ENCODE measurements at regions of chr6 and their contacts with region 1.

Region 1: DNA sequence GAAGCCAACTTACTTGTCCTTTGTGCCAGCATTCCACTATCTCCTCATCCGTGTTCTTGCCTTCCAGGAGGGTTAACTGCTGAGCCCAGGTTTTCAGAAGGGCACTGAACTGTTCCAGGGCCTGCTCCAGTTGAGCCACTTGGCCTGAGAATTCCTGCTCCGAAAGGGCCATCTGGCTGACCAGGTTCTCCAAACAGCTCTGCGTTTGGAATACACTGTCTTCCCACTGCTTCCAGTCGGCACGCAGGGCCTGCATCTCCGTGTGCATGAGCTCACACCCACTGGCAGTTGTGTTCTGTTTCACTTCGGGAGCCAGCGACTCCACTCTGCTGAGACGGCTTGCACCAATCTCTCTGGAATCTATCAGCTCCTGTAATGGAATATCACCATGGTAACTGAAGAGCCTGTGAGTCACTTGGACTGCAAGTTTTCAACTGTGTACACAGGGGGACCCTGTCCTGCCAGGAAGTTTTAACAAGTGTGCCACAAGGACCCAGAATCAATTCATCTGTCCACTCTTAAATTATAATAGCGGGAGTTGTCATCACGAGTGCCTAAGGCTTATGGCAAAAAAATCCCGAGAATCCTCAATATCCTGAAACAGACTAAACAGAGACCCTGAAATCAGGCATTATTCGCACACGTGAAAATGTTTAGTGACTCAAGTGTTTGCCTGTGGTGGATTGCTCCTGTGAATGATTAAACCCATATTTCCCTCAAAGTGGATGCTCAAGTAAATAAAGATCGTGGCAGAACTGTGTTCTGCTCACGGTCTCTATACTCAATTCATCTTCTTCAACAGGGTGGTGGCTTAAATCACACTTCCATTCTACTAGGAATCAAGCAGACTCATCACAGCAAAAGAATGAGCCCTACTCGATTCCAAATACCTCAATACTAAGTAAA is 255.9 kb downstream of the SYNE1 start:
- DNase-seq: peak; percentile 97
- ATAC-seq: peak; percentile 78
- H3K4me3 ChIP-seq: peak overlapping the region; percentile 37
- H3K27ac ChIP-seq: peak overlapping the region; percentile 99
- H3K4me1 ChIP-seq: peaks cover 6% of the 10 kb centered on the region
- H3K27me3 ChIP-seq: no peaks in the 10 kb centered on the region
- CTCF ChIP-seq: no peak
- POLR2A ChIP-seq: peak; percentile 96
- RAD21 ChIP-seq: no peak

Region 2: GRCh38 chr6:152368761-152369624 is 12.3 kb before region 1 on chr6:
- CTCF ChIA-PET with region 1: interaction called, 6 read pairs
- POLR2A ChIA-PET with region 1: no interaction called
- dilution Hi-C with region 1: no loop called
- in situ Hi-C with region 1: no loop called
- intact Hi-C with region 1: loop called (anchors 1 kb)
- DNase-seq: peak; percentile 35
- ATAC-seq: peak; percentile 56
- H3K4me3 ChIP-seq: no peak overlapping the region
- H3K27ac ChIP-seq: peak overlapping the region; percentile 37; the same call in 1 of the 2 replicates
- H3K4me1 ChIP-seq: peaks cover 5% of the 10 kb centered on the region
- H3K27me3 ChIP-seq: no peaks in the 10 kb centered on the region
- CTCF ChIP-seq: no peak
- POLR2A ChIP-seq: no peak
- RAD21 ChIP-seq: no peak

Region 3: GRCh38 chr6:152471456-152472265 is 90.4 kb after region 1 on chr6:
- CTCF ChIA-PET with region 1: interaction called, 3 read pairs
- POLR2A ChIA-PET with region 1: no interaction called
- dilution Hi-C with region 1: no loop called
- in situ Hi-C with region 1: no loop called
- intact Hi-C with region 1: loop called (anchors 5 kb)
- DNase-seq: peak; percentile 49
- ATAC-seq: peak; percentile 89
- H3K4me3 ChIP-seq: peak overlapping the region; percentile 50; the same call in 1 of the 2 replicates
- H3K27ac ChIP-seq: peak overlapping the region; percentile 37; the same call in 1 of the 2 replicates
- H3K4me1 ChIP-seq: no peaks in the 10 kb centered on the region
- H3K27me3 ChIP-seq: no peaks in the 10 kb centered on the region
- CTCF ChIP-seq: no peak
- POLR2A ChIP-seq: no peak
- RAD21 ChIP-seq: no peak

Region 4: GRCh38 chr6:152484806-152485205 is 103.6 kb after region 1 on chr6:
- CTCF ChIA-PET with region 1: no interaction called
- POLR2A ChIA-PET with region 1: no interaction called
- dilution Hi-C with region 1: no loop called
- in situ Hi-C with region 1: no loop called
- intact Hi-C with region 1: loop called (anchors 2 kb)
- DNase-seq: no peak
- ATAC-seq: no peak
- H3K4me3 ChIP-seq: no peak overlapping the region
- H3K27ac ChIP-seq: no peak overlapping the region
- H3K4me1 ChIP-seq: no peaks in the 10 kb centered on the region
- H3K27me3 ChIP-seq: no peaks in the 10 kb centered on the region
- CTCF ChIP-seq: no peak
- POLR2A ChIP-seq: no peak
- RAD21 ChIP-seq: no peak

Region 5: GRCh38 chr6:152609188-152609587 is 227.9 kb after region 1 on chr6:
- CTCF ChIA-PET with region 1: no interaction called
- POLR2A ChIA-PET with region 1: no interaction called
- dilution Hi-C with region 1: no loop called
- in situ Hi-C with region 1: no loop called
- intact Hi-C with region 1: no loop called
- DNase-seq: no peak
- ATAC-seq: no peak
- H3K4me3 ChIP-seq: no peak overlapping the region
- H3K27ac ChIP-seq: no peak overlapping the region
- H3K4me1 ChIP-seq: no peaks in the 10 kb centered on the region
- H3K27me3 ChIP-seq: no peaks in the 10 kb centered on the region
- CTCF ChIP-seq: no peak
- POLR2A ChIP-seq: no peak
- RAD21 ChIP-seq: no peak

Region 6: GRCh38 chr6:152669895-152670294 is 288.6 kb after region 1 on chr6:
- CTCF ChIA-PET with region 1: no interaction called
- POLR2A ChIA-PET with region 1: no interaction called
- dilution Hi-C with region 1: no loop called
- in situ Hi-C with region 1: no loop called
- intact Hi-C with region 1: loop called (anchors 10 kb)
- DNase-seq: peak; percentile 60
- ATAC-seq: peak; percentile 79
- H3K4me3 ChIP-seq: no peak overlapping the region
- H3K27ac ChIP-seq: no peak overlapping the region
- H3K4me1 ChIP-seq: peaks cover 2% of the 10 kb centered on the region; the same call in 1 of the 2 replicates
- H3K27me3 ChIP-seq: no peaks in the 10 kb centered on the region
- CTCF ChIP-seq: peak; percentile 65
- POLR2A ChIP-seq: no peak
- RAD21 ChIP-seq: peak; percentile 71

Region 7: GRCh38 chr6:152982768-152983636 is 601.8 kb after region 1 on chr6 and contains the start of gene FBXO5:
- CTCF ChIA-PET with region 1: no interaction called
- POLR2A ChIA-PET with region 1: no interaction called
- dilution Hi-C with region 1: no loop called
- in situ Hi-C with region 1: no loop called
- intact Hi-C with region 1: loop called (anchors 5 kb)
- DNase-seq: peak; percentile 97
- ATAC-seq: peak; percentile 94
- H3K4me3 ChIP-seq: peak within 1 kb of the TSS; percentile 73
- H3K27ac ChIP-seq: peak within 1 kb of the TSS; percentile 96
- H3K4me1 ChIP-seq: peaks cover 5% of the 10 kb centered on the region
- H3K27me3 ChIP-seq: no peaks in the 10 kb centered on the region
- CTCF ChIP-seq: no peak
- POLR2A ChIP-seq: peak; percentile 72
- RAD21 ChIP-seq: no peak
- total RNA-seq, gene FBXO5: 16.7 and 25.3 TPM in 2 replicates